ENCODE measurements at regions of chr17 and their contacts with region 1.

Region 1: GRCh38 chr17:40803617-40804082 is 3.9 kb upstream of the KRT28 start:
- DNase-seq: peak; percentile 71 to 74
- ATAC-seq: peak in 7 of 8 donors; percentile 67 to 94 (median 82)
- H3K4me3 ChIP-seq: no peak overlapping the region
- H3K27ac ChIP-seq: no peak overlapping the region
- H3K4me1 ChIP-seq: peaks cover 0 to 8% (median 3%) of the 10 kb centered on the region in 9 donors
- H3K27me3 ChIP-seq: peaks cover 0 to 78% (median 20%) of the 10 kb centered on the region in 7 donors
- CTCF ChIP-seq: peak; percentile 49 to 92 (median 83)

Region 2: DNA sequence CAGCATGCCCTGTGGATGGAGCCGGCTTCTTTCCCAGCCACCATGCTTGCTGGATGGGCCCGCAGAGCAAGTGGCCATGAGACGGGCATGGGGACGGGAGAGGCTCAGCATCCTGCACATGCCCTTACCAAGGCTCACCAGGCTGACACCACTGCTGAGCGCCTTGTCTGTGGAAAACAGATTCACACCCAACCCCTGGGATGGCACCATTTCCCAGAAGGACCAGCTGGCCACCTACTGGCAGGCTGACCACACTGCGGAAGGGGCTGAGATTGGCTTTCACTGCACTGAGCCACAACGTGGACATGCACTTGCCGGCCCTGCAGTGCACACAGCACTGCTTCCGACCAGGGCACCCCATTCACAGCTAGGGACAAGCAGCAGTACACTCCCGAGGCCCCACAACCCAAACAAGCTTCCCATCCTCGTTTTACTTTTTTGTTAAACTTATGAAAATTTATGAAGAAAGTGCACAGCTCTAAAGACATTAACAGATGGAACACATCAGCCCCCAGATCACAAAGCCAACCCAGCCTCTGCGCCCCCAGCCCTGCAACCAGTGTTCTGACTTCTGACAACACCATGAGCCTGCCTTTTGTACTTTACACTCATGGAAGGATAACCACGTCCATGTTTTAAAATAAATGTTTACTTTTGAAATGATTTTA is 525.8 kb after region 1 on chr17:
- intact Hi-C with region 1: loop called in 2 of 10 experiments (anchors 5 kb)
- DNase-seq: peak in 1 of 2 donors; percentile 35
- ATAC-seq: peak in 2 of 8 donors; percentile 52 to 66
- H3K4me3 ChIP-seq: no peak overlapping the region
- H3K27ac ChIP-seq: no peak overlapping the region
- H3K4me1 ChIP-seq: no peaks in the 10 kb centered on the region
- H3K27me3 ChIP-seq: peaks cover 0 to 24% (median 0%) of the 10 kb centered on the region in 7 donors
- CTCF ChIP-seq: peak; percentile 16 to 59 (median 53)

Measured in heart right ventricle (tissue), 16 donors.